Esophagus muscularis mucosa (tissue), 4 donors: ENCODE measurements at regions of chr4 and their contacts with region 1.

Region 1: GRCh38 chr4:47463235-47463956 is at the start of gene COMMD8:
- DNase-seq: peak; percentile 99
- H3K4me3 ChIP-seq: peak within 1 kb of the TSS; percentile 82 to 91 (median 86)
- H3K27ac ChIP-seq: peak within 1 kb of the TSS; percentile 84 to 87 (median 86)
- H3K4me1 ChIP-seq: peaks cover 5 to 28% (median 17%) of the 10 kb centered on the region in 4 donors
- H3K27me3 ChIP-seq: no peaks in the 10 kb centered on the region
- CTCF ChIP-seq: peak; percentile 41 to 58 (median 57)
- EP300 ChIP-seq: no peak
- POLR2A ChIP-seq: no peak
- total RNA-seq, gene COMMD8: 10.3 to 19.9 (median 14.1) TPM

Region 2: GRCh38 chr4:47538495-47539154 is 75.2 kb after region 1 on chr4:
- intact Hi-C with region 1: no loop called
- DNase-seq: no peak
- H3K4me3 ChIP-seq: no peak overlapping the region
- H3K27ac ChIP-seq: no peak overlapping the region
- H3K4me1 ChIP-seq: no peaks in the 10 kb centered on the region
- H3K27me3 ChIP-seq: no peaks in the 10 kb centered on the region
- CTCF ChIP-seq: no peak
- EP300 ChIP-seq: no peak
- POLR2A ChIP-seq: no peak

Region 3: DNA sequence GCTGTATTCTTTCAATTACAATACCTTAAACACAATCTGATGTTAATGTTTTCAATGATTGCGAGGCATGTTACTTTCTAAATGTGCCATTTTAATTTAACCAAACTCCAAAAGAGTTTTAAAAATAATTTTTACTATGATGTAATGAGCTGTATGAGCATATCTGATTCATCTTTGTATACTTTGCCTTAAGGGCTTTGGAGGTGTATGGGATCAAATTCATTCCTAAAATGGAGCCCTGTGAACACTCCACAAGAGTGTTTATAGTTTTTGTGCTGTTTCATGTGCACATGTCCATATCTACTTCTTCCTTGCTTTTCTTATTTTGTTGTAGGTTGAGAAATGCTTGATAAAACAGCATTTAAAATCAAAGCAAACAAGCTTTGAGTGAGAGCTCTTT is 104.1 kb after region 1 on chr4:
- intact Hi-C with region 1: loop called (anchors 5 kb)
- DNase-seq: no peak
- H3K4me3 ChIP-seq: no peak overlapping the region
- H3K27ac ChIP-seq: no peak overlapping the region
- H3K4me1 ChIP-seq: peaks cover 0 to 7% (median 3%) of the 10 kb centered on the region in 4 donors
- H3K27me3 ChIP-seq: no peaks in the 10 kb centered on the region
- CTCF ChIP-seq: no peak
- EP300 ChIP-seq: no peak
- POLR2A ChIP-seq: no peak

Region 4: GRCh38 chr4:47914220-47914925 is 451.0 kb after region 1 on chr4 and contains the start of gene NFXL1:
- intact Hi-C with region 1: loop called (anchors 10 kb)
- DNase-seq: peak; percentile 98
- H3K4me3 ChIP-seq: peak within 1 kb of the TSS; percentile 85 to 92 (median 90)
- H3K27ac ChIP-seq: peak within 1 kb of the TSS; percentile 81 to 88 (median 84)
- H3K4me1 ChIP-seq: peaks cover 11 to 20% (median 17%) of the 10 kb centered on the region in 4 donors
- H3K27me3 ChIP-seq: no peaks in the 10 kb centered on the region
- CTCF ChIP-seq: no peak
- EP300 ChIP-seq: no peak
- POLR2A ChIP-seq: peak; percentile 27
- total RNA-seq, gene NFXL1: 6.5 to 15.0 (median 10.6) TPM